Caco-2 (cell line): ENCODE measurements at regions of chr11 and their contacts with region 1.

Region 1: DNA sequence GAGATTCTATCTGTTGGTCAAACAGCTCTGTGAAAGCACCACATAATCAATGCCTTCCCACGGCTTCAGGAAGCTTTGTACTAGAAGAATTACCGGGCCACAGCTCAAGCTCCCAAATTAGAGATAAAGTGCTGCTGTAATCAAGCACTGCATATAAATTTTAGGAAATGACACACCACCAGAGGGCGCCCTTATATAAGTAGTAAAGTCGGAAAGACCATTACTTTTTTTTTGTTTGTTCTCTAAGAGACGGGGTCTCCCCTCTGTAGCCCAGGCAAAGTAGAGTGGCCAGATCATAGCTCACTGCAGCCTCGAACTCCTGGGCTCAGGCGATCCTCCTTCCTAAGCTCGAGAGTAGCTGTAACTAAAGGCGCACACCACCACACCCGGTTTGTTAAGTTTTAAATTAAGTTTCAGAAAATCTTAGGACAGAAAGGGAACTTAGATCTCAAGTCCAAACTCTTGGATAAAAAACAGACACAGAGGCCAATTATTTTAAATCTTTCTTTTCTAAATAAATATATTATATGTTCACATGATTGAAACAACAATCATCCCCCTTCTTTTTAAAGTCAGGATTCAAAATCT is 32.6 kb downstream of the PRCP start:
- DNase-seq: peak; percentile 84 to 89
- H3K4me3 ChIP-seq: no peak overlapping the region
- H3K4me3 Mint-ChIP-seq: no peak overlapping the region
- H3K27ac Mint-ChIP-seq: no peak overlapping the region
- H3K4me1 ChIP-seq: no peaks in the 10 kb centered on the region
- H3K4me1 Mint-ChIP-seq: no peaks in the 10 kb centered on the region
- H3K27me3 ChIP-seq: no peaks in the 10 kb centered on the region
- H3K27me3 Mint-ChIP-seq: no peaks in the 10 kb centered on the region
- CTCF ChIP-seq: peak; percentile 75 to 95

Region 2: DNA sequence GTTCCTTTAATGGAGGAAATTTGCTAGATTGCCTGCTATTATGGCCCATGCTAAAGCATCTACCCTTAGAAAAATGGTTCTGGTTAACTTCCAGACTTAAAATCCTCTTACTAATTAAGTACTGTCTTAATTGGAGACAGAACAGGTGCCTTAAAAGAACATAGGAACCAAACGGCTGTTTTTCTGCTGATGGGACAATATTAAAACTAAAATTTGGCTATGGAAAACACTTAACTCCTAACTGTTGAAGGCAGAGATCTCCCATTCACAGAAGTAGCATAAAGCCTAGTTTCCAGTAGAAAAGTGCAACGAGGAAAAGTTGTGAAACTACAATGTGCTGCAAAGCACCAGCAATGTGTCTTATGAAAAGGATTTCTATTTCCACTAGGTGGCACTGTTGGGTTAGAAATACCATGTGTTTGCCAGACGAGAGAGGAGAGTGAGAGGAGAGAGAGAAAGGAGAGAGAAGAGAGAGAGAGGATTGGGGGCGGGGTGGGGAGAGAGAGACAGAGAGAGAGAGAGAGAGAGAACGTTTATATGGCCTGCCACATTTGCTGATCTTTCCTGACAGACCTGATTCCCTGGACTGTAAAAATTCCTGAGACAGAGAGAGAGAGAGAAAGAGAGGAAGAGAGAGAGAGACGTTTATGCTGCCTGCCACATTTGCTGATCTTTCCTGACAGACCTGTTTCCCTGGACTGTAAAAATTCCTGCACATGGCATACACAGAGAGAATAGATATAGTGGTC is 185.4 kb before region 1 on chr11:
- CTCF ChIA-PET with region 1: no interaction called
- POLR2A ChIA-PET with region 1: no interaction called
- intact Hi-C with region 1: loop called (anchors 1 kb)
- DNase-seq: peak; percentile 57 to 78
- H3K4me3 ChIP-seq: no peak overlapping the region
- H3K4me3 Mint-ChIP-seq: peak overlapping the region; percentile 45
- H3K27ac Mint-ChIP-seq: no peak overlapping the region
- H3K4me1 ChIP-seq: no peaks in the 10 kb centered on the region
- H3K4me1 Mint-ChIP-seq: peaks cover 12% of the 10 kb centered on the region
- H3K27me3 ChIP-seq: no peaks in the 10 kb centered on the region; the same call in 1 of the 2 replicates
- H3K27me3 Mint-ChIP-seq: peaks cover 3% of the 10 kb centered on the region
- CTCF ChIP-seq: peak; percentile 72 to 76

Region 3: GRCh38 chr11:82775736-82776346 is 91.7 kb before region 1 on chr11:
- CTCF ChIA-PET with region 1: interaction called, 5 read pairs
- POLR2A ChIA-PET with region 1: no interaction called
- intact Hi-C with region 1: loop called (anchors 1 kb)
- DNase-seq: peak; percentile 55 to 77
- H3K4me3 ChIP-seq: no peak overlapping the region
- H3K4me3 Mint-ChIP-seq: no peak overlapping the region
- H3K27ac Mint-ChIP-seq: no peak overlapping the region
- H3K4me1 ChIP-seq: no peaks in the 10 kb centered on the region
- H3K4me1 Mint-ChIP-seq: no peaks in the 10 kb centered on the region
- H3K27me3 ChIP-seq: no peaks in the 10 kb centered on the region
- H3K27me3 Mint-ChIP-seq: peaks cover 16% of the 10 kb centered on the region
- CTCF ChIP-seq: peak; percentile 83 to 94

Region 4: GRCh38 chr11:82927254-82927880 is 59.8 kb after region 1 on chr11:
- CTCF ChIA-PET with region 1: interaction called, 13 read pairs
- POLR2A ChIA-PET with region 1: no interaction called
- intact Hi-C with region 1: loop called (anchors 1 kb)
- DNase-seq: peak in 1 of 2 experiments; percentile 67
- H3K4me3 ChIP-seq: no peak overlapping the region
- H3K4me3 Mint-ChIP-seq: no peak overlapping the region
- H3K27ac Mint-ChIP-seq: no peak overlapping the region
- H3K4me1 ChIP-seq: no peaks in the 10 kb centered on the region
- H3K4me1 Mint-ChIP-seq: peaks cover 11% of the 10 kb centered on the region
- H3K27me3 ChIP-seq: no peaks in the 10 kb centered on the region
- H3K27me3 Mint-ChIP-seq: no peaks in the 10 kb centered on the region
- CTCF ChIP-seq: peak; percentile 87 to 88

Region 5: GRCh38 chr11:82939456-82939855 is 71.9 kb after region 1 on chr11:
- CTCF ChIA-PET with region 1: no interaction called
- POLR2A ChIA-PET with region 1: no interaction called
- intact Hi-C with region 1: no loop called
- DNase-seq: no peak
- H3K4me3 ChIP-seq: no peak overlapping the region
- H3K4me3 Mint-ChIP-seq: no peak overlapping the region
- H3K27ac Mint-ChIP-seq: no peak overlapping the region
- H3K4me1 ChIP-seq: peaks cover 13% of the 10 kb centered on the region
- H3K4me1 Mint-ChIP-seq: no peaks in the 10 kb centered on the region
- H3K27me3 ChIP-seq: no peaks in the 10 kb centered on the region
- H3K27me3 Mint-ChIP-seq: no peaks in the 10 kb centered on the region
- CTCF ChIP-seq: no peak